ENCODE measurements at regions of chr1 and their contacts with region 1.

Region 1: DNA sequence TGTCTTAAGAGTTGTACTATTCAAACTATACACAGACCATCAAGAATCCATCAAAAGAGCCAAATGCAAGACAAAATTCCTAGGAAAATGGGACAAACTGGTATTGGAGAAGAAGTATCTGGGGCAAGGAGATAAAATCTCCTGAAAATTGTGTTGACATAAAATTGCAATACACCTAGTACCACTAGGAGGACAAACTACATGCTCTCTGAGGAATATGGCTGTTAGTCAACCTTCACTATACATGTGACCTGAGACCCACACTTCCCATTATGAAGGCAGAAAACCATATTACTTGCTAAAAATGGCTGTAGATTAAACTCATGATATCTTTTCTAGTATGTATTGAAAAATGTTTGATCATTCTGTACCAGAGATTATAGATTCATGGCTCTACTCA is 30.0 kb downstream of the IRF2BP2 start:
- DNase-seq: no peak
- ATAC-seq: no peak

Region 2: GRCh38 chr1:234188454-234188792 is 391.5 kb before region 1 on chr1:
- intact Hi-C with region 1: no loop called
- DNase-seq: no peak
- ATAC-seq: no peak

Region 3: DNA sequence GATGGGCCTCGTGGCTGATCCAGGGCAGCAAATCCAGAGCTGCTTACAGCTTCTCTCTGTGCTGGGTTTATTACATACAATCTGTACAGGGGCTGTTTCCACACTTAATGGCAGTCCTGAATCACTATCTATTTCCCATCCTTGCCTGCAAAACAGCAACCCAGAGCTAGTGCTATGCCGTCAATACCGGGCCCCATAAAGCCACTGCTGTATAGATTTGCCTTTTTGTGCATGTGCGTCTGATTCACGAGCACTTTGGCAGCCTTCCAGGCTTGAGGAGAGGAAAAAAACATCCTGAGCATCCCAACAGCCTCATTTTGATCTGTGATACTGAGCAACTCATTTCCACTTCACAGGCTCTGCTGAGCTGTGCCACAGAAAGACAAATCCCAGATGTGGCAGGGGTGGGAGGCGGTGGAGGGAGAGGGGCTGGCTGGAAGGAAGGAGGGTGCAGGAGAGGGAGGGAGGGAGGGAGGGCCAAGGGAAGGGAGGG is 35.8 kb before region 1 on chr1:
- intact Hi-C with region 1: loop called (anchors 5 kb)
- DNase-seq: no peak
- ATAC-seq: peak; percentile 79

Measured in Right ventricle myocardium inferior (tissue), 1 donor.